Sciatic nerve (tissue), 2 donors: ENCODE measurements at regions of chr5 and their contacts with region 1.

Region 1: GRCh38 chr5:163861670-163862069 is 356.3 kb downstream of the MAT2B start:
- DNase-seq: no peak
- ATAC-seq: no peak

Region 2: DNA sequence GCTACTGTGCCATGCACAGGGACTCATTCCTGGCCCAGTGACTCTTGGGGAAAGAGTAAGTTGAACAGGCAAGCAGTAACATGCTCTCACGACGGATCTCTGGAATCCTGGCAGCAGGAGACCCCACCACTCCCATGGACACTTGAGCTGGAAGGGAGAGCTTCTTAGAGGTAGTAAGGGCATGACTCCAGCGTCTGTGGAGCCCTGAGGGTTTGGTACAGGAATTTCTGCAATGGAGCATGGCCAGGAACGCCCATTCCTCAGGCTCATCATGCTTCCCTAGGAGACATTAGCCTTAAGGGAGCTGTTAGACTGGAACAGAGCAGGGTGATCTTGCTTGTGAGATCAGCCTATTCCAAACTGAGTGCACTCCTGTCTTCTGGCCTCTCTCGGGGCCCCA is 143.4 kb before region 1 on chr5:
- intact Hi-C with region 1: no loop called
- DNase-seq: no peak
- ATAC-seq: no peak

Region 3: GRCh38 chr5:163822548-163822947 is 39.1 kb before region 1 on chr5:
- intact Hi-C with region 1: loop called (anchors 1 kb)
- DNase-seq: no peak
- ATAC-seq: no peak

Region 4: GRCh38 chr5:163915481-163915961 is 53.9 kb after region 1 on chr5:
- intact Hi-C with region 1: no loop called
- DNase-seq: no peak
- ATAC-seq: peak; percentile 59